Heart right ventricle (tissue), 16 donors: ENCODE measurements at regions of chr3 and their contacts with region 1.

Region 1: DNA sequence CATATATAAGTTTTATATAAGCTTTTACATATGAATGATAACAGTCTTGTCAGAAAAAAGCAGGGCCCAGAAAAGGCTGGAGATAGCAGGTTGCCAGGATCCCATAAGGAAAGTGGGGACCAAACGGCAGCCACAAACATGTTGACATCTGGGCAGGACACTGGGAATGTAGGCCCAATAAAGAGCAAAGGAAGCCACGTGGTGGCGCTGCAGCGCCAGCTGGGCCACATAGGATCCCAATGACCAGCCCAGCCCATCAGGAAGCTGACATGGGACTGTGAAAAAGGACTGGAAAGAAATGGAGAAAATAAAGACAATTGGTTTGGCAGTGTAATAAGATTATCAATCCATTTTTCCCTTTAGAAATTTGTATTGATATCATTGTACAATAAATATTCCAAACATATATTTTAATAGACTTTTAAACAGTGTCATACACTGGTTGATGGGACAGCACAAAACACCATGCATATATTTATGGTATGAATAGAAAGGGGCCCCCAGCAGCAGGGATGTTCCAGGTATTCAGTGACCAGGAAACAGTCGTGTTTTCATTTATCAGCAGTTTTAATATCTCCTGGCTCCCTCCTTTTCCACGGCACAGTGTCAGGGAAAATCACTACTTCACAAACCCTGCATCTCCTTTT is 89.0 kb upstream of the STRIT1 start:
- DNase-seq: peak; percentile 68 to 77
- ATAC-seq: peak; percentile 74 to 93 (median 89)
- H3K4me3 ChIP-seq: no peak overlapping the region
- H3K27ac ChIP-seq: no peak overlapping the region
- H3K4me1 ChIP-seq: peaks cover 0 to 18% (median 3%) of the 10 kb centered on the region in 9 donors
- H3K27me3 ChIP-seq: no peaks in the 10 kb centered on the region
- CTCF ChIP-seq: peak; percentile 19 to 74 (median 64)

Region 2: DNA sequence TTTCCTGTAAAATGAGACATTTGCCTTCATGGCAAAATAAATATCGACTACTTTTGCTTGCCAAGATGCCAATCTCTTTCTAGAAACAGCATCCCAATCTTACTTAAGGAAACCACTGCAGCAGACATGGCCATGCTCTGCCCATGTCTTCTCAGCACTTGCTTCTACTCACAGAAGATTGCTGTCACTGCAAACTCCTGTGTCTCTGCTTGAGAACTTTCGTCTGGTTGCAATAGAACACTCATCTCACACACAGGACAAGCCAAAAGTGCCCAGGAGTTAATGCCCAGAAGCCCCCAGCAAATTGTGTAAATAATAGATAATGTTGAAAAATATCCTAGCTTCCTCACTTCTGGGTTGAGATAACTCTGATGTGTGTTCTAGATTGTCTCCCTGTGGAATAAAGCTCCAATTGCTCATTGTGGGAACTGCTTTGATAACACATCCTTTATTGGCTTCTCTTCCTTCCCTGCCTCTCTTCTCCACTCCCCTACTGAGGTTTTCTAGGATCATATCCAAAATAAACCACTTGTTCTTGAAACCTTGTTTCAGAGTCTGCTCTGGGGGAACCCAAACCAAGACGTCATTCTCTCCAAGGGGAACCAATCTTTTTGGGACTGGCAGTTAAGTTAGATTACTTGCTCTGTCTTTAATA is 67.2 kb after region 1 on chr3:
- intact Hi-C with region 1: loop called in 1 of 10 experiments (anchors 10 kb)
- DNase-seq: peak in 1 of 2 donors; percentile 27
- ATAC-seq: peak; percentile 64 to 91 (median 76)
- H3K4me3 ChIP-seq: no peak overlapping the region
- H3K27ac ChIP-seq: peak overlapping the region in 2 of 10 donors; percentile 11 to 27
- H3K4me1 ChIP-seq: peaks cover 0 to 12% (median 0%) of the 10 kb centered on the region in 9 donors
- H3K27me3 ChIP-seq: no peaks in the 10 kb centered on the region
- CTCF ChIP-seq: no peak